Activated T-helper 2 cell treated with anti-CD3 and anti-CD28 coated beads, Interferon-gamma antibody, Interleukin-2, Interleukin-4, amounts not matched to agents 10 μg/mL and 5 μg/mL and 100 μg/mL, durations not matched to agents 14 hours and 24 hours and 36 hours (primary cell): ENCODE measurements at regions of chr12 and their contacts with region 1.

Region 1: GRCh38 chr12:49515266-49515665 is 23.6 kb upstream of the KCNH3 start:
- DNase-seq: no peak
- H3K4me3 Mint-ChIP-seq: no peak overlapping the region
- H3K27ac Mint-ChIP-seq: no peak overlapping the region
- H3K4me1 Mint-ChIP-seq: peaks cover 21% of the 10 kb centered on the region
- H3K27me3 Mint-ChIP-seq: no peaks in the 10 kb centered on the region

Region 2: DNA sequence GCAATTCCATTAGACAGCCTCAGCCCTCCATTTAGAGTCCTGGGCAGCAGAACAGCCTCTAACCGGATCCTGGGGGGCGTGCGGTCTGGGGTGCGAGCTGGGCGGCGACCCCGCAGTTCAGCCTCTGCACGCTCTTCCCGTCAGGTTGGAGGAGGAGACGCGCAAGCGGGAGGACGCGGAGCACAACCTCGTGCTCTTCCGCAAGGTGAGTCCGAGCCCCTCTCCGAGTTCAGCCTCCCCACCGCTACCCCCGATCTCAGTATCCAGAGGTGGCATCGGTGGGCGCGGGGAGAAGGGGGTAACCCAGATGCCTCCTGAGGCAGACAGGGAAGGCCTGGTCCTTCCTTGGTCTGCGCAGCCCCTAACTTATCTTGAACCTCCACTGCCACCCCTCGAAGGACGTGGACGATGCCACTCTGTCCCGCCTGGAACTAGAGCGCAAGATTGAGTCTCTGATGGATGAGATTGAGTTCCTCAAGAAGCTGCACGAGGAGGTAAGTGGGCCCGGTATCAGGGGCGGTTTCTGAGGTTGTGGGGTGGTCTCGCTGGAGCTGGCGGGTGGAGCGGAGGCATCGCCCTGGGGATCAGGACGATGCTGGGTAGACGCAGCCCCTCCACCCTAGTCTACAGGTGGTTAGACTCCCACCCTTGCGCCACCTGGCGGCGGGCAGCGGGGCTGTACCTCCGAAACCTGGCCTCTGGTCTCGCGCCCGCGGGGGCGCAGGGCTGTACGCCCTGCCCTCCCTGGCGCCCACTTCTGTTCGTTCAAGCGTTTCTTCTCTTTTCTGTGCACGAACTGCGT is 219.0 kb before region 1 on chr12:
- intact Hi-C with region 1: loop called (anchors 5 kb)
- DNase-seq: peak; percentile 56
- H3K4me3 Mint-ChIP-seq: peak overlapping the region; percentile 57
- H3K27ac Mint-ChIP-seq: no peak overlapping the region
- H3K4me1 Mint-ChIP-seq: peaks cover 17% of the 10 kb centered on the region
- H3K27me3 Mint-ChIP-seq: peaks cover 52% of the 10 kb centered on the region

Region 3: DNA sequence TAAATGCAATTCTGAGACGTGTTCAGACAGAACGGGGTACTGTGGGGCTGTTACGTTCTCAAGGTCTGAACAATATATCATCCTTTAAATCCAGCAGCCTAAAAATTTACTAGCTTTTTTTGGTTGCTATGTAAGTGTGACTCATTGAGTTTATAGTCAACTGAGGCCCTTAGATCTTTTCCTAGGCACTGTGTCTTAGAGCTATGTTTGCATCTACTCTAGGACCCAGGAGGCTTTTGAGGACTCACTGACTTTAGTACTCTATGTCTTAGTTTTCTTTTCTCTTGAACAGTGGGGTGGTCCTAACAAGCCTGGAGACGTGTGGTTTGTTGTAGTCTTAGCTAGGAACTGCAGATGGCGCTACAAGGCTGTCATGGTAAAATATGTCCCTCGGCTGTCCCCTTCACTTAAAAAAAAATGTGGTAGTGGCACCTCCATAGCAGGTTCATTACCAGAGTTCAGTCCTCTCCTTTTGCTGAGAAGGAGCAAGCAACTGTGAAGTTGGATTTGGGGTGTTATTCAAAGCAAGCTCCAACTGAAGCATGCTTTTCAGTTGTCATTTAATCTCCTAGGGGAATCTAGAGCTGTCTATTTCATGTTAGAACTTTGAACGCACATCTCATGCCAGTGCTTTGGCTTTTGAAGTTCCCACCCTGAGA is 156.7 kb before region 1 on chr12:
- intact Hi-C with region 1: loop called (anchors 1 kb)
- DNase-seq: peak; percentile 54
- H3K4me3 Mint-ChIP-seq: no peak overlapping the region
- H3K27ac Mint-ChIP-seq: no peak overlapping the region
- H3K4me1 Mint-ChIP-seq: peaks cover 4% of the 10 kb centered on the region
- H3K27me3 Mint-ChIP-seq: peaks cover 29% of the 10 kb centered on the region

Region 4: DNA sequence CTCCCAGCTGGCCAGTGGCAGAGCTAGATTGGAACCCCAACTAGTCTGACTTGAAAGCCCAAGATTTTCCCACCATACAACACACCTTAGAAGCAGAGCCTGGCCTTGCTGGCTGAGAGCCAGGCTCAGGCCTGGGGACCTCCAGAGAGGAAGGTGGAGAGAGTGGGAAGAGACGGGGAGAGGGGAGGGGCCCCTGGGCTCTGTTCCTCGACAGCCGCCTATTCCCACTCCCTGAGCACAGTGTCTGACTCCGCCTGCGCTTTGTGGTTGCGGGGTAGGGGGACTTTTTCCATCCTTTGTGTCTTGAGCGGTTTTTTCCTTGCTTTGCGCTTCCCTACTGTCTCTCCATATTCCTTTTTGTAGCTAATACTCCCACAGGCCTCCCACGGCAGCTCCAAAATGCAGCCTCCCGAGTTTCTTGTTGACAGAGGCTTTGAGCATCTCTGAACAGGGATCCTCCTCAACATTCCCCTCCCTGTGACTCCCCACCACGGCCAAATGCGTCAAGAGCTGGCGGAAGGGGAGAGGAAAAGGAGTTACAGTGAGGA is 19.5 kb after region 1 on chr12:
- intact Hi-C with region 1: no loop called
- DNase-seq: no peak
- H3K4me3 Mint-ChIP-seq: no peak overlapping the region
- H3K27ac Mint-ChIP-seq: no peak overlapping the region
- H3K4me1 Mint-ChIP-seq: peaks cover 1% of the 10 kb centered on the region
- H3K27me3 Mint-ChIP-seq: peaks cover 31% of the 10 kb centered on the region

Region 5: DNA sequence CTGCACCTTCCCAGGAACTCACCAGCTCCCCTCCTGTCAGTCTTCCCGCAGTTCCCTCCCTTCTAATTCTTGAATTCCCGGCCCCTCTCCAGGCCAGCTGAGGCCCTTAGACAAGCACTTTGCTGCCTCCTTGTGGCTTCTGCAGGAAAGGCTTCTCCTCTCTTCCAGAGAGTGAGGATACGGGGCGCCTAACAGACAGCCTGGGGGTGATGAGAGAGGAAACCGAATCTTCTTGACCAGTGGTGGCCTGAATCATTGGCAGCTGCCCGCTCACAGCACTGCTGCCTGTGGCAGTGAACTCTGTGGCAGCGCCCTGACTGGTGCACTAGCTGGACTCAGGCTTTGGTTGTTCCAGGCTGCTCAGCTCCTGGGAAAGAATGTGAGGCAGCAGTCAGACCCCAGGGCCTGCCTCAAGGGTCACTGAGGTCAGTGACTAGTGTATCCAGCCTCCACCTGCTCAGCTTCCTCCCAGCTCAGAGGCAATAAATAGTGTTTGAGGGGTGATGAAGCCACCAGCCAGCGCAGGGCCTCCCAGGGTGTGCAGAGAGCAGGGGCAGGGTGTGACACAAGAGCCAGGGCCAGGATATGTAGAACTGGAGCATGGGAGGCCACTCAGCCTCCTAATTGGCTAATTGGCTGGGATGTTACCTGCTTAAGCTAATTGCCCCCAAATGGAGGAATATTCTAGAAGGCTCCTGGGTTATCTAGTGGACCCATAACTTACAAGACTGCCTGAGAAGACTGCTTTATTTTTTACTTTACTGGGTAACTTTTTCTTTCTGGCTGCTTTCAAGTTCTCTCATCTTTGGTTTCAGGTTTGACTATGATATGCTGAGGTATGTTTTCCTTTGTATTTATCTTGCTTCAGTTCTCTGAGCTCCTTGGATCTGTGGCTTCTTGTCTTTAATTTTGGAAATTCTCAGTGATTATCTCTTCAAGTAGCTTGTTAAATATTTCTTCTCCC is 65.6 kb after region 1 on chr12:
- intact Hi-C with region 1: loop called (anchors 5 kb)
- DNase-seq: peak; percentile 40
- H3K4me3 Mint-ChIP-seq: no peak overlapping the region
- H3K27ac Mint-ChIP-seq: peak overlapping the region; percentile 51
- H3K4me1 Mint-ChIP-seq: peaks cover 16% of the 10 kb centered on the region
- H3K27me3 Mint-ChIP-seq: no peaks in the 10 kb centered on the region